PC-3 (cell line): ENCODE measurements at regions of chr7 and their contacts with region 1.

Region 1: DNA sequence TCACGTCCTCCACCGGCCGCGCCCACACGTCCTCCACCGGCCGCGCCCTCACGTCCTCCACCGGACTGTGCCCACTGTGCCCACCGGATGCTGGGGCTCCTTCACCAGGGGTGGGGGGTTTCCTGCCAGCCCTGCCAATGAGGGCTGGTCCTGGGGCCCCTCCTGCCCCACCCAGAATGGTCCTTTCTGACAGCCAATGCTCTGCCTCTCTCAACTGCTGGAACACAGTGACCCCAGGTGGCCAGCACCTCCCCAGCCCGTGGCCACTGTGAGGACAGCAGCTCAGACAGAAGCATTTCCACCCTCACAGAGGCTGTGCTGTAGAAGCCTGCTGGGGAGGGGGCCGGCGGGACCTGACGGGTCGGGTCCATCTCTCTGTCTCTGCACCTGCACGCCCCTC is 90.1 kb upstream of the DNAAF5 start:
- DNase-seq: peak; percentile 71
- ATAC-seq: peak; percentile 86
- H3K4me3 ChIP-seq: peak overlapping the region; percentile 70
- H3K27ac ChIP-seq: peak overlapping the region; percentile 61
- H3K4me1 ChIP-seq: peaks cover 15% of the 10 kb centered on the region
- H3K27me3 ChIP-seq: no peaks in the 10 kb centered on the region
- CTCF ChIP-seq: peak; percentile 75

Region 2: GRCh38 chr7:726084-726853 is 89.9 kb after region 1 on chr7 and contains the start of gene DNAAF5:
- CTCF ChIA-PET with region 1: no interaction called
- POLR2A ChIA-PET with region 1: interaction called, 4 read pairs
- intact Hi-C with region 1: loop called (anchors 2 kb)
- DNase-seq: peak; percentile 85
- ATAC-seq: peak; percentile 84
- H3K4me3 ChIP-seq: peak within 1 kb of the TSS; percentile 77
- H3K27ac ChIP-seq: peak within 1 kb of the TSS; percentile 66
- H3K4me1 ChIP-seq: peaks cover 21% of the 10 kb centered on the region
- H3K27me3 ChIP-seq: no peaks in the 10 kb centered on the region
- CTCF ChIP-seq: no peak
- total RNA-seq, gene DNAAF5: 66.3 and 73.7 TPM in 2 replicates

Region 3: DNA sequence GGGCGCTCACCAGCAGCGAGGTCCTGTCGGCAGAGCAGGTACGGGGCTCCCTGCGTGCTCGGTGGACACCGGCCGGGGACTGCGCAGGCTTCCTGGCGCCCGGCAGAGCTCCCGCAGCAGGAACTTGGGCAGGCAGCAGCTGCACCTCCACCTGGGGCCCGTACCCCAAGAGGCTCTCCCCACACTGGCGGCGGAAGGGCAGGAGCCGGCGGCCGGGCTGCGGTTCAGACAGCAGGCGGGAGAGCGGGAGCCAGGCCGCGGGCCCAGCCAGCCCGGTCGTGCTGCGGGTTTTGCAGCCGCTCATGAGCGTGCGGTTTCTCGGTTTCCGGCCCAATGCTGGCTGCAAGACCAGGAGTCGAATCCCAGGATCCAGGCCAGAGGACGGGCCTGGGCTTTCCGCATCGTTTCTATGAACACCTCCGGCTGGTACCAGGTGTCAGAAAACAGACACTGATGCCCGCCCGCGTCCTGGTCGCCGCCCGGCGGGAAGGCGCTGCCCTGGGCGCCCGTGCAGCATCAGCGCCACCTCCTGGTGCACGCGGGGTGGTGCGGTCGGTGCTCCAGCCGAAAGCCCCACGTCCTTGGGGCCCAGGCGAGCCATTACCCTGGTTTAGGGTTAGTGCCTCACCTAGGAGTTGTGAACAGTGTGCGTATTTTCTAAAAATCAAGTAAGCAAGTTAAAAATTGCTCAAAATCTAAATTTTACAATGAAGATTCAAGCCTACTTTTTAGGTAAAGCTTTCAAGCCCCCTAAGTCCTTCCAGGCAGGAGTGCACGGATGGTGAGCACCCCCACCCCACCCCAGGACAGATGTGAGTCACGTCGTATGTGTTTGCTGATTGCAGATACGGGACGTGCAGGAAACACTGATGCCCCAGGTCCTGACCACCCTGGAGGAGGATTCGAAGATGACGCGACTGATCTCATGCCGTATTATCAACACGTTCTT is 138.0 kb after region 1 on chr7:
- CTCF ChIA-PET with region 1: no interaction called
- POLR2A ChIA-PET with region 1: no interaction called
- intact Hi-C with region 1: loop called (anchors 5 kb)
- DNase-seq: peak; percentile 32
- ATAC-seq: peak; percentile 65
- H3K4me3 ChIP-seq: no peak overlapping the region
- H3K27ac ChIP-seq: no peak overlapping the region
- H3K4me1 ChIP-seq: no peaks in the 10 kb centered on the region
- H3K27me3 ChIP-seq: no peaks in the 10 kb centered on the region
- CTCF ChIP-seq: peak; percentile 90